A673 (cell line): ENCODE measurements at regions of chr21 and their contacts with region 1.

Region 1: GRCh38 chr21:29195981-29196669 is 65.7 kb downstream of the MAP3K7CL start:
- DNase-seq: peak; percentile 95
- H3K4me3 ChIP-seq: peak overlapping the region; percentile 52
- H3K27ac ChIP-seq: peak overlapping the region; percentile 83
- H3K4me1 ChIP-seq: peaks cover 14% of the 10 kb centered on the region
- H3K27me3 ChIP-seq: no peaks in the 10 kb centered on the region
- CTCF ChIP-seq: peak; percentile 75

Region 2: GRCh38 chr21:29298348-29299045 is 102.4 kb after region 1 on chr21 and contains the start of gene BACH1:
- CTCF ChIA-PET with region 1: no interaction called
- POLR2A ChIA-PET with region 1: no interaction called
- intact Hi-C with region 1: loop called (anchors 2 kb)
- DNase-seq: peak; percentile 90
- H3K4me3 ChIP-seq: peak within 1 kb of the TSS; percentile 81
- H3K27ac ChIP-seq: peak within 1 kb of the TSS; percentile 90
- H3K4me1 ChIP-seq: peaks cover 39% of the 10 kb centered on the region
- H3K27me3 ChIP-seq: no peaks in the 10 kb centered on the region
- CTCF ChIP-seq: peak; percentile 31; the same call in 1 of the 2 replicates
- total RNA-seq, gene BACH1: 99.5 and 103 TPM in 2 replicates

Region 3: GRCh38 chr21:29360799-29361765 is 165.0 kb after region 1 on chr21:
- CTCF ChIA-PET with region 1: no interaction called
- POLR2A ChIA-PET with region 1: interaction called, 14 read pairs
- intact Hi-C with region 1: no loop called
- DNase-seq: no peak
- H3K4me3 ChIP-seq: no peak overlapping the region
- H3K27ac ChIP-seq: no peak overlapping the region
- H3K4me1 ChIP-seq: no peaks in the 10 kb centered on the region
- H3K27me3 ChIP-seq: no peaks in the 10 kb centered on the region
- CTCF ChIP-seq: peak; percentile 32; the same call in 1 of the 2 replicates